ENCODE measurements at regions of chr6 and their contacts with region 1.

Region 1: DNA sequence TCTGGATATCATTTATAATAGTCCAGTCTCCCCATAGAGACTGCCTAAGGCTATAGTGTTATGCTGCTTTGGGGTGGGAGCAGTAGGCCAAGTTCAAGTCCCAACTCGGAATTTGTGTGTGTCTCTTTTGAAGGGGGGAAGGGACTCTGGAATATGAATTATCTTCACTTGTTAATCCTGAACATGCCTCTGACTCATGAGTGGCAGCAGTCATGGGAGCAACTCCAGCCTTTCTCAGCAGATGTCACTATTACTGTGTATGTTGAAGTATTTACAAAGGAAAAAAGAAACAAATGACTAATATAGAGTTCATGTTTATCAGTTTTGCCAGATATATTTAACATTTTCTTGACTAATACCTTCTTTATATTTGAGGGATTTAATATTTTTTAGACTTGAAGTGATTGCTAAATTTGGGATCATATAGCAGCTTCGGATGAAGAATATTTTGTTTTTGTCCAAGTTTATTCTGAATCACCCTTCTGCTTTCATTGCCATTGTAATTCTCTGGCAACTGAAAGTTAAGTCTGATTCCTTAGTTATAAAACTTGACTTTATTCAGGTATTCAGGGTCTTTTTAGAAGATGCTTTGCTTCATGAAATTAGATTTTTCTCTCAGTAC is 23.4 kb downstream of the FAM217A start:
- DNase-seq: no peak
- ATAC-seq: no peak
- H3K4me3 Mint-ChIP-seq: no peak overlapping the region
- H3K27ac Mint-ChIP-seq: no peak overlapping the region
- H3K4me1 Mint-ChIP-seq: no peaks in the 10 kb centered on the region
- H3K27me3 Mint-ChIP-seq: no peaks in the 10 kb centered on the region
- CTCF ChIP-seq: no peak

Region 2: GRCh38 chr6:4124351-4124750 is 68.8 kb after region 1 on chr6:
- CTCF ChIA-PET with region 1: no interaction called
- POLR2A ChIA-PET with region 1: no interaction called
- intact Hi-C with region 1: loop called (anchors 5 kb)
- DNase-seq: no peak
- ATAC-seq: no peak
- H3K4me3 Mint-ChIP-seq: no peak overlapping the region
- H3K27ac Mint-ChIP-seq: no peak overlapping the region
- H3K4me1 Mint-ChIP-seq: no peaks in the 10 kb centered on the region
- H3K27me3 Mint-ChIP-seq: no peaks in the 10 kb centered on the region
- CTCF ChIP-seq: no peak

Region 3: GRCh38 chr6:5672581-5673011 is 1617.1 kb after region 1 on chr6:
- CTCF ChIA-PET with region 1: no interaction called
- POLR2A ChIA-PET with region 1: no interaction called
- intact Hi-C with region 1: no loop called
- DNase-seq: no peak
- ATAC-seq: no peak
- H3K4me3 Mint-ChIP-seq: no peak overlapping the region
- H3K27ac Mint-ChIP-seq: no peak overlapping the region
- H3K4me1 Mint-ChIP-seq: peaks cover 20% of the 10 kb centered on the region
- H3K27me3 Mint-ChIP-seq: no peaks in the 10 kb centered on the region
- CTCF ChIP-seq: no peak

Measured in activated B cell treated with CpG ODN at 0.5 μM for 24 hours (primary cell).